ENCODE measurements at regions of chr16 and their contacts with region 1.

Region 1: GRCh38 chr16:89410794-89411309 is 79.5 kb downstream of the ANKRD11 start:
- DNase-seq: peak in 3 of 9 donors; percentile 17 to 34 (median 26)
- ATAC-seq: peak; percentile 28
- H3K4me3 ChIP-seq: no peak overlapping the region
- H3K4me3 Mint-ChIP-seq: peak overlapping the region; percentile 6 to 86 (median 76)
- H3K27ac ChIP-seq: peak overlapping the region; percentile 72
- H3K27ac Mint-ChIP-seq: peak overlapping the region; percentile 89 to 96 (median 93)
- H3K4me1 ChIP-seq: peaks cover 70 to 84% of the 10 kb centered on the region in 2 donors
- H3K4me1 Mint-ChIP-seq: peaks cover 71 to 92% (median 78%) of the 10 kb centered on the region in 7 donors
- H3K27me3 ChIP-seq: no peaks in the 10 kb centered on the region
- H3K27me3 Mint-ChIP-seq: no peaks in the 10 kb centered on the region

Region 2: DNA sequence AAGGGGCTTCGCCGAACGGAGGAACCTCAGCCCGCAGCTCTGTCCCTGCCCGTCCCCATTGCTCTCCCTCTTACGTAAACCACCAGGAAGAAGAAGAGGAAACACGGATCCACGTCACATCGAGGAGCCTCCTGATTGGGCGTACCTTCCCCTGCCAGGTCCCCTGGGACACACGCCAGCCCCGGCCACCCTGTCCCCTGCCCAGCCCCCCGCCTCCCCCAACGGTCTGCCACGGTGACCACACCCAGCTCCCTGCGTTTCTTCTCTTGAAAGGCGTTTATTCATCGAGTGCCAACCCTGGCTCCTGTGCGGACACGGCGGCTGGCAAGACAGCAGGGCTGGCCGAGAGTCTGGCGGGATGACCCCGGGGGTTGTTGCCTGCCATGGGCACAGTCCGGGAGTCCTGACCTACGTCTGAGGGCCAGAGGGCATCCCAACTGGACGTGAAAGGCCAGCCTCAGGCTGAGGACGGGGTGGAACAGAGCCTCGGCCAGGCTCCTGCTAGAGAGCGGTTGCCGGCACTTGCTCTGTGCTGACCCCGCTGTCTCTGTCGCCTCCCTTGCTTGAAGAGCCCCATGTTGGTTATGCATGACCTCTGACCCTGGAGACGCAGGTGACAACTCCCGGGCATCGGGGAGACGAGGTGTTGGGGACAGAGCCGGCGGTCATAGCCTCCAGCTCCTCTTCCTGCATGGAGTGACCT is 357.8 kb before region 1 on chr16:
- CTCF ChIA-PET with region 1: no interaction called
- POLR2A ChIA-PET with region 1: no interaction called
- intact Hi-C with region 1: no loop called
- DNase-seq: peak in 1 of 9 donors; percentile 20
- ATAC-seq: peak; percentile 66
- H3K4me3 ChIP-seq: no peak overlapping the region
- H3K4me3 Mint-ChIP-seq: peak overlapping the region; percentile 81 to 94 (median 88)
- H3K27ac ChIP-seq: peak overlapping the region; percentile 53
- H3K27ac Mint-ChIP-seq: peak overlapping the region in 8 of 9 donors; percentile 9 to 97 (median 86)
- H3K4me1 ChIP-seq: no peaks in the 10 kb centered on the region
- H3K4me1 Mint-ChIP-seq: peaks cover 0 to 11% (median 4%) of the 10 kb centered on the region in 7 donors
- H3K27me3 ChIP-seq: no peaks in the 10 kb centered on the region
- H3K27me3 Mint-ChIP-seq: no peaks in the 10 kb centered on the region

Region 3: GRCh38 chr16:89300311-89300975 is 110.4 kb before region 1 on chr16:
- CTCF ChIA-PET with region 1: no interaction called
- POLR2A ChIA-PET with region 1: no interaction called
- intact Hi-C with region 1: no loop called
- DNase-seq: no peak
- ATAC-seq: no peak
- H3K4me3 ChIP-seq: no peak overlapping the region
- H3K4me3 Mint-ChIP-seq: no peak overlapping the region
- H3K27ac ChIP-seq: no peak overlapping the region
- H3K27ac Mint-ChIP-seq: peak overlapping the region in 1 of 9 donors; percentile 51
- H3K4me1 ChIP-seq: peaks cover 10 to 17% of the 10 kb centered on the region in 2 donors
- H3K4me1 Mint-ChIP-seq: peaks cover 39 to 66% (median 59%) of the 10 kb centered on the region in 7 donors
- H3K27me3 ChIP-seq: no peaks in the 10 kb centered on the region
- H3K27me3 Mint-ChIP-seq: no peaks in the 10 kb centered on the region

Region 4: GRCh38 chr16:89325861-89326471 is 84.9 kb before region 1 on chr16:
- CTCF ChIA-PET with region 1: no interaction called
- POLR2A ChIA-PET with region 1: interaction called, 9 read pairs
- intact Hi-C with region 1: loop called in 1 of 2 experiments (anchors 5 kb)
- DNase-seq: no peak
- ATAC-seq: peak; percentile 60
- H3K4me3 ChIP-seq: no peak overlapping the region
- H3K4me3 Mint-ChIP-seq: peak overlapping the region; percentile 34 to 71 (median 47)
- H3K27ac ChIP-seq: peak overlapping the region; percentile 9
- H3K27ac Mint-ChIP-seq: peak overlapping the region; percentile 41 to 88 (median 81)
- H3K4me1 ChIP-seq: peaks cover 54 to 80% of the 10 kb centered on the region in 2 donors
- H3K4me1 Mint-ChIP-seq: peaks cover 53 to 93% (median 82%) of the 10 kb centered on the region in 7 donors
- H3K27me3 ChIP-seq: no peaks in the 10 kb centered on the region
- H3K27me3 Mint-ChIP-seq: no peaks in the 10 kb centered on the region

Region 5: GRCh38 chr16:89363621-89364393 is 47.0 kb before region 1 on chr16:
- CTCF ChIA-PET with region 1: no interaction called
- POLR2A ChIA-PET with region 1: no interaction called
- intact Hi-C with region 1: loop called (anchors 2 to 5 kb)
- DNase-seq: peak in 2 of 9 donors; percentile 12 to 59
- ATAC-seq: no peak
- H3K4me3 ChIP-seq: no peak overlapping the region
- H3K4me3 Mint-ChIP-seq: peak overlapping the region; percentile 10 to 73 (median 62)
- H3K27ac ChIP-seq: peak overlapping the region; percentile 23
- H3K27ac Mint-ChIP-seq: peak overlapping the region; percentile 13 to 90 (median 77)
- H3K4me1 ChIP-seq: peaks cover 56 to 75% of the 10 kb centered on the region in 2 donors
- H3K4me1 Mint-ChIP-seq: peaks cover 65 to 99% (median 87%) of the 10 kb centered on the region in 7 donors
- H3K27me3 ChIP-seq: no peaks in the 10 kb centered on the region
- H3K27me3 Mint-ChIP-seq: no peaks in the 10 kb centered on the region

Region 6: GRCh38 chr16:89381788-89382187 is 29.1 kb before region 1 on chr16:
- CTCF ChIA-PET with region 1: no interaction called
- POLR2A ChIA-PET with region 1: no interaction called
- intact Hi-C with region 1: no loop called
- DNase-seq: no peak
- ATAC-seq: no peak
- H3K4me3 ChIP-seq: no peak overlapping the region
- H3K4me3 Mint-ChIP-seq: peak overlapping the region in 7 of 10 donors; percentile 34 to 90 (median 50)
- H3K27ac ChIP-seq: no peak overlapping the region
- H3K27ac Mint-ChIP-seq: peak overlapping the region in 8 of 9 donors; percentile 24 to 76 (median 59)
- H3K4me1 ChIP-seq: peaks cover 43 to 51% of the 10 kb centered on the region in 2 donors
- H3K4me1 Mint-ChIP-seq: peaks cover 67 to 98% (median 89%) of the 10 kb centered on the region in 7 donors
- H3K27me3 ChIP-seq: no peaks in the 10 kb centered on the region
- H3K27me3 Mint-ChIP-seq: no peaks in the 10 kb centered on the region

Region 7: DNA sequence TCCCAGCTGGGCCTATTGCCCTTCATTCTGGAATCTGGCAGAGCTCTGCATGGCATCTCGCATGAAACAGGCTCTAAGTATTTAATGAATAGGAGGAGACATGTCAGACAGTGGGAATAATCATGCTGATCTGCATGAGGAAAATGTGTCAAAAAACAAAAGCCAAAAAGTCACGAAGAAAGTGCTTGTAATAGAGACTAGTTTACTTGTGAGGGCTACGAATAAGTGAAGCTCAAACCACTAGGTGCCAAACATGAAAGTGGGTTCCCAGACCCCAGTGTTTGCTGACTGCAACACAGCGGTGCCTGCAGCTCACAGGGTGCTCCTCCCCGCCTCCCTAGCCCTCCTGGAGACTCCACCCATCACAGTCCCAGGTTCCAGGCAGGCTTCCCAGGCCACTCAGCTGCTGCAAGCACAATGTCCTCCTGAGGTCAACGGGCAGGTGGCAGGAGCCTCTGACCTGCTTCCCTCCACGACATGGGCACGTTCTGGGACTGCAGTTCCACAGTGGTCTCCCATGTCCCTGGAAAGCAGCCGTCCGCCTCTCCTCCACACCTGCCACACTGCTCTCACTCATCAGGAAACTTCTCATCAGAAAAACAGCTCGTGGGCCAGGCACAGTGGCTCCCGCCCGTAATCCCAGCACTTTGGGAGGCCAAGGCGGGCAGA is 17.0 kb before region 1 on chr16:
- CTCF ChIA-PET with region 1: no interaction called
- POLR2A ChIA-PET with region 1: interaction called, 3 read pairs
- intact Hi-C with region 1: loop called in 1 of 2 experiments (anchors 2 kb)
- DNase-seq: no peak
- ATAC-seq: no peak
- H3K4me3 ChIP-seq: no peak overlapping the region
- H3K4me3 Mint-ChIP-seq: no peak overlapping the region
- H3K27ac ChIP-seq: no peak overlapping the region
- H3K27ac Mint-ChIP-seq: peak overlapping the region in 5 of 9 donors; percentile 43 to 81 (median 49)
- H3K4me1 ChIP-seq: peaks cover 13 to 27% of the 10 kb centered on the region in 2 donors
- H3K4me1 Mint-ChIP-seq: peaks cover 35 to 86% (median 63%) of the 10 kb centered on the region in 7 donors
- H3K27me3 ChIP-seq: no peaks in the 10 kb centered on the region
- H3K27me3 Mint-ChIP-seq: no peaks in the 10 kb centered on the region

Region 8: GRCh38 chr16:89442990-89443731 is 32.3 kb after region 1 on chr16:
- CTCF ChIA-PET with region 1: interaction called, 3 read pairs
- POLR2A ChIA-PET with region 1: no interaction called
- intact Hi-C with region 1: loop called (anchors 5 kb)
- DNase-seq: peak in 2 of 9 donors; percentile 34 to 45
- ATAC-seq: no peak
- H3K4me3 ChIP-seq: no peak overlapping the region
- H3K4me3 Mint-ChIP-seq: peak overlapping the region; percentile 60 to 82 (median 78)
- H3K27ac ChIP-seq: peak overlapping the region; percentile 58
- H3K27ac Mint-ChIP-seq: peak overlapping the region; percentile 71 to 96 (median 81)
- H3K4me1 ChIP-seq: peaks cover 78 to 89% of the 10 kb centered on the region in 2 donors
- H3K4me1 Mint-ChIP-seq: peaks cover 0 to 93% (median 73%) of the 10 kb centered on the region in 7 donors
- H3K27me3 ChIP-seq: no peaks in the 10 kb centered on the region
- H3K27me3 Mint-ChIP-seq: no peaks in the 10 kb centered on the region

Measured in naive thymus-derived CD4-positive, alpha-beta T cell (primary cell).